IMR-90 (cell line): ENCODE measurements at regions of chr16 and their contacts with region 1.

Region 1: DNA sequence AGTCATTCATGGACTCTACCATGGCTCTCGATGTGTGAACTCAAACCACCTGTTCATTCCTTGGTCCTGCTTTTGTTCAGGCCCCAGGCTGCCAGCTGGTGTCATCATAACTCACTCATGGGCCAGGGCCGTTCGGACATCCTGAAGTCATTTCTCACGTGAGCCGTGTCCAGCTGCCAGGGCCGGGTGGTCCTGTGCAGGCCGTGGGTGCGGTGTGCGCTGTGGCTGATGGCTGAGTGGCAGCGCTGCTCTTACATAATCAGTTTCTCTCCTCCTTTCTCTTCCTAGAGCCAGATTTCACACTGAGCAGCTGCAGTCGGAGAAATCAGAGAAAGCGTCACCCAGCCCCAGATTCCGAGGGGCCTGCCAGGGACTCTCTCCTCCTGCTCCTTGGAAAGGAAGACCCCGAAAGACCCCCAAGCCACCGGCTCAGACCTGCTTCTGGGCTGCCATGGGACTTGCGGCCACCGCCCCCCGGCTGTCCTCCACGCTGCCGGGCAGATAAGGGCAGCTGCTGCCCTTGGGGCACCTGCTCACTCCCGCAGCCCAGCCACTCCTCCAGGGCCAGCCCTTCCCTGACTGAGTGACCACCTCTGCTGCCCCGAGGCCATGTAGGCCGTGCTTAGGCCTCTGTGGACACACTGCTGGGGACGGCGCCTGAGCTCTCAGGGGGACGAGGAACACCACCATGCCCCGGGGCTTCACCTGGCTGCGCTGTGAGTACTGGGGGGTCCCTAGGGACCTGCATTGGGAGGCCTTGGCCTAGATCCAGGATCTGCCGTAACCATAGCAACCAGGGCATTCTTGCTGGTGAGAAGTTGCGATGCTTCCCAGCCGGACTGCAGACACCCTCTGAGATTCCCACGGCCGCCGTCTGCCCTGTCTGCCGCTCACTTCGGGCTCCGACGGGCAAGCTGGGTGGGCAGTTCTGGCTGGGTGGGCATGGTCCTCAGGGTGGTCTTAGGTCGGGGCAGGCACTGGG is at the start of gene IL34:
- DNase-seq: no peak
- ATAC-seq: no peak
- H3K4me3 ChIP-seq: no peak within 1 kb of the TSS
- H3K27ac ChIP-seq: no peak within 1 kb of the TSS
- H3K4me1 ChIP-seq: peaks cover 3% of the 10 kb centered on the region
- H3K27me3 ChIP-seq: 0 out of 2 replicates have a peak, but pooled peaks cover 4% of the 10 kb centered on the region
- CTCF ChIP-seq: no peak
- POLR2A ChIP-seq: no peak
- RAD21 ChIP-seq: no peak
- total RNA-seq, gene IL34: 1.1 and 1.3 TPM in 2 replicates

Region 2: GRCh38 chr16:70324998-70325747 is 321.4 kb before region 1 on chr16:
- CTCF ChIA-PET with region 1: no interaction called
- POLR2A ChIA-PET with region 1: no interaction called
- dilution Hi-C with region 1: no loop called
- in situ Hi-C with region 1: no loop called
- intact Hi-C with region 1: no loop called
- DNase-seq: no peak
- ATAC-seq: no peak
- H3K4me3 ChIP-seq: no peak overlapping the region
- H3K27ac ChIP-seq: no peak overlapping the region
- H3K4me1 ChIP-seq: no peaks in the 10 kb centered on the region
- H3K27me3 ChIP-seq: no peaks in the 10 kb centered on the region
- CTCF ChIP-seq: no peak
- POLR2A ChIP-seq: no peak
- RAD21 ChIP-seq: no peak

Region 3: DNA sequence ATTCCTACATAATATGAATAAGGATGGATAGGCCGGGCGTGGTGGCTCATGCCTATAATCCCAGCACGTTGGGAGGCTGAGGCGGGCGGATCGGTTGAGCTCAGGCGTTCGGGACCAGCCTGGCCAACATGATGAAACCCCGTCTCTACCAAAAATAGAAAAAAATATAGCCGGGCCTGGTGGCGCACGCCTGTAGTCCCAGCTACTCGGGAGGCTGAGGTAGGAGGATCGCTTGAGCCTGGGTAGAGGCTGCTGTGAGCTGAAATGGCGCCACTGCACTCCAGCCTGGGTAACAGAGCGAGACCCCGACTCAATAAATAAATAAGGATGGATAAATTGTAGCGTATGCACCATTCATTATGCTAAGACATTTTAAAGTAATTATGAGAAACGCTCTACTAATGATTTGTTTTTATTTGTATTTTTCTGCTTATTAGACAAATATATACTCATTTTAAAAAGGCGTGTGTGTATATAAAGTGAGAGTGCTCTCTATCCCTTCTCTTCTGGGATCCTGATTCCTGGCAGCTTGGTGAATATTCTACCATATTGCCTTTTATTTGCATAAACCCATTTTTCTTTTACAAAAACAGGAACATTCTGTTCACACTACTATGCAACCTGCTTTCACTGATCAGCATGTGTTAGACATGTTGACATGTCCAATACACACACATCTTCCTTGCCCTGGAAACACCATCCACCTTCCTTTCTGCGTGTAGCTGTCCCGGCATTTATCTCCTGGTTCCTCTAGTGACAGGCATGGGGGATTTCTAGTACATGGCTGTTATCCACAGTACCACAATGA is 273.4 kb before region 1 on chr16:
- CTCF ChIA-PET with region 1: no interaction called
- POLR2A ChIA-PET with region 1: no interaction called
- dilution Hi-C with region 1: no loop called
- in situ Hi-C with region 1: loop called (anchors 5 kb)
- intact Hi-C with region 1: no loop called
- DNase-seq: no peak
- ATAC-seq: no peak
- H3K4me3 ChIP-seq: no peak overlapping the region
- H3K27ac ChIP-seq: no peak overlapping the region
- H3K4me1 ChIP-seq: no peaks in the 10 kb centered on the region
- H3K27me3 ChIP-seq: no peaks in the 10 kb centered on the region
- CTCF ChIP-seq: no peak
- POLR2A ChIP-seq: no peak
- RAD21 ChIP-seq: no peak